CD4-positive, alpha-beta memory T cell (primary cell): ENCODE measurements at regions of chr4 and their contacts with region 1.

Region 1: GRCh38 chr4:128809477-128810330 is at the start of gene JADE1:
- DNase-seq: peak; percentile 88 to 94 (median 90)
- H3K4me3 ChIP-seq: peak within 1 kb of the TSS; percentile 89 to 98
- H3K4me3 Mint-ChIP-seq: peak within 1 kb of the TSS; percentile 96 to 100 (median 99)
- H3K27ac ChIP-seq: peak within 1 kb of the TSS; percentile 61
- H3K27ac Mint-ChIP-seq: peak within 1 kb of the TSS; percentile 96 to 100 (median 98)
- H3K4me1 ChIP-seq: peaks cover 23% of the 10 kb centered on the region
- H3K4me1 Mint-ChIP-seq: peaks cover 9 to 38% (median 18%) of the 10 kb centered on the region in 4 donors
- H3K27me3 ChIP-seq: no peaks in the 10 kb centered on the region
- H3K27me3 Mint-ChIP-seq: no peaks in the 10 kb centered on the region
- total RNA-seq, gene JADE1: 65.6 to 67.3 TPM

Region 2: GRCh38 chr4:127965062-127965802 is 844.5 kb before region 1 on chr4 and contains the starts of genes ABHD18 and MFSD8:
- CTCF ChIA-PET with region 1: no interaction called
- POLR2A ChIA-PET with region 1: interaction called, 15 read pairs
- intact Hi-C with region 1: loop called (anchors 1 kb)
- DNase-seq: peak; percentile 98 to 99 (median 99)
- H3K4me3 ChIP-seq: peak within 1 kb of the TSS; percentile 90 to 91
- H3K4me3 Mint-ChIP-seq: peak within 1 kb of the TSS; percentile 89 to 98 (median 96)
- H3K27ac ChIP-seq: peak within 1 kb of the TSS; percentile 92
- H3K27ac Mint-ChIP-seq: peak within 1 kb of the TSS; percentile 86 to 98 (median 97)
- H3K4me1 ChIP-seq: peaks cover 48% of the 10 kb centered on the region
- H3K4me1 Mint-ChIP-seq: peaks cover 27 to 58% (median 43%) of the 10 kb centered on the region in 4 donors
- H3K27me3 ChIP-seq: no peaks in the 10 kb centered on the region
- H3K27me3 Mint-ChIP-seq: no peaks in the 10 kb centered on the region
- total RNA-seq, gene ABHD18: 23.5 to 24.6 TPM
- total RNA-seq, gene MFSD8: 43.3 to 49.2 TPM

Region 3: GRCh38 chr4:128191115-128191781 is 618.5 kb before region 1 on chr4:
- CTCF ChIA-PET with region 1: interaction called, 3 read pairs
- POLR2A ChIA-PET with region 1: no interaction called
- intact Hi-C with region 1: loop called (anchors 1 kb)
- DNase-seq: peak; percentile 54 to 79 (median 63)
- H3K4me3 ChIP-seq: no peak overlapping the region
- H3K4me3 Mint-ChIP-seq: no peak overlapping the region
- H3K27ac ChIP-seq: no peak overlapping the region
- H3K27ac Mint-ChIP-seq: peak overlapping the region in 2 of 7 donors; percentile 63 to 79
- H3K4me1 ChIP-seq: no peaks in the 10 kb centered on the region
- H3K4me1 Mint-ChIP-seq: peaks cover 3 to 6% (median 4%) of the 10 kb centered on the region in 4 donors
- H3K27me3 ChIP-seq: no peaks in the 10 kb centered on the region
- H3K27me3 Mint-ChIP-seq: no peaks in the 10 kb centered on the region

Region 4: DNA sequence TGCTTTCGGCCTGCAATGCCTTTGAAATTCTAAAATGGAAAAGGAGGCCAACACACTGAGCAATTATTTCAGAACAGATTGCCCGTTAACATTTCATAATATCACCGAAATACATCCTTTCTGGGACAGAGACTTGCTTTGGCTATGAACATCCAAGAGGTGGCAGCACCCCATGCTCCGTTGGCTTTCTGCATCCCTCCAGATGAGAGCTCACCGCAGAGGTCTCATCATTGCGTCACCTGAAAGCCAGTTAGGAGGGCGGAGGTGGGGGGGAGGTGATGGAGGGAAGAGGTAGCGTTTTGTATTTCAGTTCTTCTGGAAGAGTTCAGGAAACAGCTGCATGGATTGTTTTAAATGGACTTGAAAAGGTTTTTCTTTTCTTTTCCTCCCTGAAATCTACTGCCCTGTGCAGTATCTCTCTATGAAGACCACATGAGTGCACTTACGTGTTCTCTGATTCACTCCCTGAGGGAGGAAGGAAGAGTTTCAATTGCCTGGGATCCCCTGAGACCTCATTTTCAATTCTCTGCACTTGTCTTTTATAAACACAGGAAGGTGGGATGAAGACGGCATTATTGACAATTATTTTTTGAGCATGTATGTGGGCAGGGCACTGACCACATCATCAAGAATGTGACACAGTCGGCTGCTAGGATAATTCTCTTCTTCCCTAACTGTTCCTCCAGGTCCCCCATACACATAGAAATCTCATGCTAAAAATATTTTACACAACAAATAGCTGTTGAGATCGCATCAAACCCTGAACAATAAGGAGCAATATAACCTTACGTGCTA is 355.2 kb before region 1 on chr4:
- CTCF ChIA-PET with region 1: no interaction called
- POLR2A ChIA-PET with region 1: no interaction called
- intact Hi-C with region 1: loop called (anchors 1 kb)
- DNase-seq: peak; percentile 36 to 73 (median 45)
- H3K4me3 ChIP-seq: no peak overlapping the region
- H3K4me3 Mint-ChIP-seq: peak overlapping the region in 1 of 8 donors; percentile 31
- H3K27ac ChIP-seq: no peak overlapping the region
- H3K27ac Mint-ChIP-seq: no peak overlapping the region
- H3K4me1 ChIP-seq: no peaks in the 10 kb centered on the region
- H3K4me1 Mint-ChIP-seq: peaks cover 0 to 5% (median 3%) of the 10 kb centered on the region in 4 donors
- H3K27me3 ChIP-seq: no peaks in the 10 kb centered on the region
- H3K27me3 Mint-ChIP-seq: peaks cover 2 to 3% of the 10 kb centered on the region in 2 donors

Region 5: GRCh38 chr4:128782076-128782715 is 27.5 kb before region 1 on chr4:
- CTCF ChIA-PET with region 1: interaction called, 14 read pairs
- POLR2A ChIA-PET with region 1: interaction called, 5 read pairs
- intact Hi-C with region 1: loop called (anchors 1 kb)
- DNase-seq: peak; percentile 47 to 64 (median 61)
- H3K4me3 ChIP-seq: no peak overlapping the region
- H3K4me3 Mint-ChIP-seq: no peak overlapping the region
- H3K27ac ChIP-seq: no peak overlapping the region
- H3K27ac Mint-ChIP-seq: no peak overlapping the region
- H3K4me1 ChIP-seq: no peaks in the 10 kb centered on the region
- H3K4me1 Mint-ChIP-seq: peaks cover 0 to 2% (median 0%) of the 10 kb centered on the region in 4 donors
- H3K27me3 ChIP-seq: no peaks in the 10 kb centered on the region
- H3K27me3 Mint-ChIP-seq: peaks cover 3 to 5% of the 10 kb centered on the region in 2 donors

Region 6: GRCh38 chr4:128854433-128854832 is 44.7 kb after region 1 on chr4:
- CTCF ChIA-PET with region 1: interaction called, 8 read pairs
- POLR2A ChIA-PET with region 1: interaction called, 15 read pairs
- intact Hi-C with region 1: no loop called
- DNase-seq: peak; percentile 26 to 47 (median 35)
- H3K4me3 ChIP-seq: no peak overlapping the region
- H3K4me3 Mint-ChIP-seq: peak overlapping the region in 6 of 8 donors; percentile 19 to 48 (median 46)
- H3K27ac ChIP-seq: no peak overlapping the region
- H3K27ac Mint-ChIP-seq: peak overlapping the region in 6 of 7 donors; percentile 53 to 92 (median 86)
- H3K4me1 ChIP-seq: peaks cover 22% of the 10 kb centered on the region
- H3K4me1 Mint-ChIP-seq: peaks cover 22 to 45% (median 29%) of the 10 kb centered on the region in 4 donors
- H3K27me3 ChIP-seq: no peaks in the 10 kb centered on the region
- H3K27me3 Mint-ChIP-seq: no peaks in the 10 kb centered on the region

Region 7: DNA sequence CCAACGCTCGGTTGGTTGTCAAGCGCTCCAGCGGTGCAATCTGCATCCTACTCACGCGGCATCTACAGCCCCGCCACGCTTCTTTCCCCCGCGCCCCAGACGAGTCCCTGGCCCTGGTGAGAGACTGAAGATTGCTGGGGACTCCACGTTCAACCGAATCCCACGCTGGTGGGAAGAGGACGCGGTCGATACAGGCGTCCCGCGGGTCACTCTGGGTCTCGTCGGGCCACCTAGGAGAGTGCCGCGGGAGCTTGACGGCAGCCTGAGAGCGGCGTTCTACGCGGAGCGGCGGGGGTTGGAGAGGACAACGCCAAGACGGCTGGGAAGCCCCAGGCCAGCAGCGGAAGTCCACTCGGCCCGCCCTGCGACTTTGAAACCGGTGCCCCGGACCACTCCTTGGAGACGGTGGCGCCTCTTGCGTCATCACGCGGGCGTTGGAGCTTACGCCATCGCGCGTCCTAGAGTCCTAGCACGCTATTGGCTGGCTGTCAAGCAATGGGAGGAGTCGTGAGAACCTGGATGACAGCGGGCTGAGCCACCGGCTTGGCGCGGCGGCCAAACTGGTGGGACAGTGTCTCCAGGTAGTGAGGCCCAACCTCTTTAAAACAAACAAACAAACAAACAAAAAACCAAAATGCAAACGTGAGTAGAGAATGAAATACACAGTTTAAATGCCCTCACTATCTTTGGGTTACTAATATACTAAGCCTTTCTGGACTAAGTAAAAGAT is 283.7 kb after region 1 on chr4 and contains the start of gene SCLT1:
- CTCF ChIA-PET with region 1: no interaction called
- POLR2A ChIA-PET with region 1: interaction called, 16 read pairs
- intact Hi-C with region 1: loop called (anchors 1 kb)
- DNase-seq: peak; percentile 93 to 98 (median 95)
- H3K4me3 ChIP-seq: peak within 1 kb of the TSS; percentile 71 to 98
- H3K4me3 Mint-ChIP-seq: peak within 1 kb of the TSS in 6 of 8 donors; percentile 10 to 57 (median 30)
- H3K27ac ChIP-seq: peak within 1 kb of the TSS; percentile 99
- H3K27ac Mint-ChIP-seq: peak within 1 kb of the TSS in 2 of 7 donors; percentile 33 to 95
- H3K4me1 ChIP-seq: peaks cover 63% of the 10 kb centered on the region
- H3K4me1 Mint-ChIP-seq: peaks cover 30 to 47% (median 38%) of the 10 kb centered on the region in 4 donors
- H3K27me3 ChIP-seq: no peaks in the 10 kb centered on the region
- H3K27me3 Mint-ChIP-seq: no peaks in the 10 kb centered on the region
- total RNA-seq, gene SCLT1: 18.2 to 20.8 TPM